CD14-positive monocyte (primary cell): ENCODE measurements at regions of chr11 and their contacts with region 1.

Region 1: GRCh38 chr11:77994412-77995362 is at the start of gene INTS4:
- DNase-seq: peak; percentile 97 to 98 (median 97)
- H3K4me3 ChIP-seq: peak within 1 kb of the TSS; percentile 56 to 97 (median 63)
- H3K4me3 Mint-ChIP-seq: peak within 1 kb of the TSS; percentile 87 to 93
- H3K27ac ChIP-seq: peak within 1 kb of the TSS; percentile 72 to 79
- H3K27ac Mint-ChIP-seq: peak within 1 kb of the TSS; percentile 94 to 98 (median 97)
- H3K4me1 ChIP-seq: peaks cover 30 to 34% of the 10 kb centered on the region in 2 donors
- H3K4me1 Mint-ChIP-seq: peaks cover 25% of the 10 kb centered on the region
- H3K27me3 ChIP-seq: no peaks in the 10 kb centered on the region
- H3K27me3 Mint-ChIP-seq: peaks cover 1 to 3% (median 2%) of the 10 kb centered on the region in 3 donors
- CTCF ChIP-seq: no peak
- polyA plus RNA-seq, gene INTS4: 23.5 to 41.7 (median 29.0) TPM

Region 2: DNA sequence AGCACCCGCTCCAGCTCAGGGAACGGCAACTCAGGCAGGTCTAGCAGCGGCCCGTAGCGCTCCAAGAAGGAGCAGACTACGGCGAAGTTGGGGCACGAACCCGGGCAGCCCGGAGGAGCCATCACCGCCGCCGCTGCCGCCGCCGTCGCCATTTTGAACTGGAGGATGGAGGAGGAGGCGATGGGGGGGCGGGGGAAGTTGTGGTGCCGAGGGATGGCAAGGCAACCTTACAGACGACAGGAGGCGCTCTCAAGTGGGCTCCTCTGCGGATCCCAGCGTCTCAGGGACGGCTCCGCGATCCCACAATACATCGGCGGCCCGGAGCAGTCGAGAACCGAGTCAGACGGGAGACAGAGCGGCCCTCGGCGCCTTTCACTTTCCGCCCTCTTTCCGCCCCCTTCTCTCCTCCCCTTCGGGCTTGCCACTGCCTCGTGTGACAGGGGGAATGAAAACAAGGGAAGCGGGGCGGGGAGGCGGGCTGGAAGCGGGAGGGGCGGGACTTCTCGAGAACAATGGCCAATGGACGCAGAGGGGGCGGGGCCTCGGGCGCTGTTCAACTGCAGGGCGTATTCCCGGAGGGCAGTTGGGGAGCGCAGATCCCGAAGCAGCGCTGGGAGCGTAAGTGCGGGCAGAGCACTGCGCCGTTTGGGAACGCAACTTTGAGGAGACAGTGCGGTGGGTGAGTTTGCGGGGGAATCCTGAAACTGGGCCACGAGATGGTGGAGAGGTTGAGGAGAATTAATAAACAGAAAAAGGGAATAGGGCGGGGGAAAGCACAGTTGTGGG is 173.9 kb before region 1 on chr11 and contains the starts of genes AAMDC and RSF1:
- intact Hi-C with region 1: loop called (anchors 2 to 10 kb)
- DNase-seq: peak; percentile 92 to 96 (median 94)
- H3K4me3 ChIP-seq: peak within 1 kb of the TSS; percentile 70 to 99 (median 96)
- H3K4me3 Mint-ChIP-seq: peak within 1 kb of the TSS; percentile 99 to 100
- H3K27ac ChIP-seq: peak within 1 kb of the TSS; percentile 77 to 85
- H3K27ac Mint-ChIP-seq: peak within 1 kb of the TSS; percentile 85 to 96 (median 93)
- H3K4me1 ChIP-seq: peaks cover 23 to 28% of the 10 kb centered on the region in 2 donors
- H3K4me1 Mint-ChIP-seq: peaks cover 31% of the 10 kb centered on the region
- H3K27me3 ChIP-seq: no peaks in the 10 kb centered on the region
- H3K27me3 Mint-ChIP-seq: peaks cover 0 to 1% (median 1%) of the 10 kb centered on the region in 3 donors
- CTCF ChIP-seq: peak; percentile 78
- polyA plus RNA-seq, gene AAMDC: 8.9 to 32.9 (median 28.1) TPM
- polyA plus RNA-seq, gene RSF1: 8.3 to 14.8 (median 9.2) TPM

Region 3: GRCh38 chr11:78188286-78189173 is 193.8 kb after region 1 on chr11 and contains the starts of genes KCTD21 and USP35:
- intact Hi-C with region 1: loop called in 1 of 2 experiments (anchors 1 kb)
- DNase-seq: peak; percentile 92 to 96 (median 96)
- H3K4me3 ChIP-seq: peak within 1 kb of the TSS; percentile 77 to 96 (median 94)
- H3K4me3 Mint-ChIP-seq: peak within 1 kb of the TSS; percentile 96 to 97
- H3K27ac ChIP-seq: peak within 1 kb of the TSS; percentile 49 to 85
- H3K27ac Mint-ChIP-seq: peak within 1 kb of the TSS; percentile 92 to 98 (median 96)
- H3K4me1 ChIP-seq: peaks cover 41 to 50% of the 10 kb centered on the region in 2 donors
- H3K4me1 Mint-ChIP-seq: peaks cover 56% of the 10 kb centered on the region
- H3K27me3 ChIP-seq: no peaks in the 10 kb centered on the region
- H3K27me3 Mint-ChIP-seq: peaks cover 0 to 3% (median 0%) of the 10 kb centered on the region in 3 donors
- CTCF ChIP-seq: no peak
- polyA plus RNA-seq, gene KCTD21: 3.2 to 9.2 (median 5.2) TPM
- polyA plus RNA-seq, gene USP35: 0.42 to 7.6 (median 0.63) TPM